Aorta (tissue), 5 donors: ENCODE measurements at regions of chr11 and their contacts with region 1.

Region 1: GRCh38 chr11:67663923-67664692 is 10.3 kb downstream of the ALDH3B2 start:
- DNase-seq: no peak
- ATAC-seq: no peak
- H3K4me3 ChIP-seq: no peak overlapping the region
- H3K27ac ChIP-seq: no peak overlapping the region
- H3K4me1 ChIP-seq: no peaks in the 10 kb centered on the region
- H3K27me3 ChIP-seq: no peaks in the 10 kb centered on the region

Region 2: DNA sequence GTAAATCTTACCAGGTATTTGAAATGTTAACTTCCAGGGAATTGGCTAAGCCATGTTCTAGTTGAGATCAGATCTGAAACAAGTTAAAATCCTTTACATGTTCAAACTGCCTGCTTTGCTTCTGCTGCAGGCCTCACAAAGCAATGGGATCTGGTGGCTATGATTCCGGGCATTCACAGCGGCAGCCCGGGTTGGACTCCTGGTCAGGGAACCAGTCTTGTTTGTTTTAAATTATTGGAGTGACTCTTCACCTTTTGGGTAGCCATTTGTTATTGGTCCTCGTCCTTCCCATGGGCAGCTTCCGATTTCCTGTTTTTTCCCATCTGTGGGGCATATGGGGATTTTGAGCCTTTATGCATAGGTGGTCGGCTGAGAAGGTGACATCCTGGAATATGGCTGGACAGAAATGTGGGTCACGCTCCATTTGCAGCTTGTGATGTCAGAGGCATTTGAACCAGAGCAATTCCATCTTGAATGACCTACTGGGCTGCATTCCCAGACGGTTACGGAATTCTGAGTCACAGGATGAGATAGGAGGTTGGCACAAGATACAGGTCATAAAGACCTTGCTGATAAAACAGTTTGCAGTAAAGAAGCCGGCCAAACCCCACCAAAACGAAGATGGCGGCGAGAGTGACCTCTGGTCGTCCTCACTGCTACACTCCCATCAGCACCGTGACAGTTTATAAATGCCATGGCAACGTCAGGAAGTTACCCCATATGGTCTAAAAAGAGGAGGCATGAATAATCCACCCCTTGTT is 100.6 kb before region 1 on chr11:
- intact Hi-C with region 1: no loop called
- DNase-seq: peak; percentile 67 to 82
- ATAC-seq: no peak
- H3K4me3 ChIP-seq: no peak overlapping the region
- H3K27ac ChIP-seq: peak overlapping the region in 1 of 2 donors; percentile 35
- H3K4me1 ChIP-seq: peaks cover 2 to 3% of the 10 kb centered on the region in 2 donors
- H3K27me3 ChIP-seq: no peaks in the 10 kb centered on the region

Region 3: DNA sequence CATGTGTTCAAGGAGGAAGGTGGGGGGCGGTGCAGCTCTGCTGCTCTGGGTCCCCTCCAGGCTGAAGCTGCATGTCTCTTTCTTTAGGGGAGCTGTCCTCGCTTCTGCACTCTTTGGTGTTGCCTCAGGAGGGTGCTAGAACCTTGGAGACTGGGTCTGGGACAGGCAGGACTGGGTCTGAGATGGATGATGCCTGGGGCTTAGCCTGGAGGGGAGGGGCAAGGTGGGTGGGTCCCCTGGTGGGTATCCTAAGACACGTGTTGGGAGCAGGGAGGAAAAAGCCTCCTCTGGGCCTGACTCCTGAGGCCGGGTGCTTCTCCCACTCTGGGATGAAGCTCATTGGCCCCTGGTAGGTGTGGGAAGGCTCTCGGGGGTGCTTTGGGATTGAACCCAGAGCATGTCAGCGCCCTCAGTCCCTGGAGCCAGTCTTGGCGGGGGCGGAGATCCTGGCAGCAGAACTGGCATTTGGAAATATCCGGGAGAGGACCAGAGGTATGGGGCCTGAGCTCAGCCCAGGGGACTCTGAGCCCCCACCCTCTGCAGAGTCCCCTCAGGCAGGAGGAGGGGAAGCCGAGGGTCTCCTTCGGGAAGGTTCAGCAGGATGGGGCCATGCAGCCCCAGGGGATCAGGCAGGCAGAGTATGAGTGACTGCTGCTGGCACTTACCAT is 87.2 kb before region 1 on chr11:
- intact Hi-C with region 1: loop called (anchors 5 kb)
- DNase-seq: no peak
- ATAC-seq: peak; percentile 19
- H3K4me3 ChIP-seq: no peak overlapping the region
- H3K27ac ChIP-seq: no peak overlapping the region
- H3K4me1 ChIP-seq: no peaks in the 10 kb centered on the region
- H3K27me3 ChIP-seq: no peaks in the 10 kb centered on the region